Cardiac septum (tissue), 1 donor: ENCODE measurements at regions of chr12 and their contacts with region 1.

Region 1: GRCh38 chr12:64890873-64891468 is 66.5 kb downstream of the TBC1D30 start:
- DNase-seq: no peak

Region 2: GRCh38 chr12:65022960-65023359 is 132.0 kb after region 1 on chr12:
- intact Hi-C with region 1: no loop called
- DNase-seq: no peak

Region 3: DNA sequence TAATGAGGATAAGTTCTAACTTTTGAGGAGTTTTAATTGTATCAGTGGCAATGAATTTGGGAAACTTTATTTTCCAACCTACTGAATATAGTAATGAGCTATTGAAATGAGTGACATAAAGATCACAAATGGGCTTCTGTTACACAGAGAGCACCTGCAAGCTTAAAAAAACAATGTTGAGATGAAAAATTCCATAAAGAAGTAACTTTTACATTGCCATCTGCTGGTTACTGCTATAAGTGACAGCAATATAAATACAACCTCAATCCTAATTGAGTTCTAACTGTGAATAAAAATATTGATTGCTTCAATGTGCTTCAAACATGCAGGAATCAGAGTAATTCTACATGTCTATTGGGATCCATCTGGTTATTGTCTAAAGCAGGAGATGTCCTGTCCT is 216.0 kb after region 1 on chr12:
- intact Hi-C with region 1: loop called (anchors 5 kb)
- DNase-seq: no peak

Region 4: GRCh38 chr12:65121049-65121955 is 230.3 kb after region 1 on chr12 and contains the start of gene WIF1:
- intact Hi-C with region 1: loop called (anchors 5 kb)
- DNase-seq: no peak
- total RNA-seq, gene WIF1: 0.13 TPM

Region 5: GRCh38 chr12:65232476-65233077 is 341.6 kb after region 1 on chr12:
- intact Hi-C with region 1: loop called (anchors 5 kb)
- DNase-seq: no peak